ENCODE measurements at regions of chr1 and their contacts with region 1.

Region 1: DNA sequence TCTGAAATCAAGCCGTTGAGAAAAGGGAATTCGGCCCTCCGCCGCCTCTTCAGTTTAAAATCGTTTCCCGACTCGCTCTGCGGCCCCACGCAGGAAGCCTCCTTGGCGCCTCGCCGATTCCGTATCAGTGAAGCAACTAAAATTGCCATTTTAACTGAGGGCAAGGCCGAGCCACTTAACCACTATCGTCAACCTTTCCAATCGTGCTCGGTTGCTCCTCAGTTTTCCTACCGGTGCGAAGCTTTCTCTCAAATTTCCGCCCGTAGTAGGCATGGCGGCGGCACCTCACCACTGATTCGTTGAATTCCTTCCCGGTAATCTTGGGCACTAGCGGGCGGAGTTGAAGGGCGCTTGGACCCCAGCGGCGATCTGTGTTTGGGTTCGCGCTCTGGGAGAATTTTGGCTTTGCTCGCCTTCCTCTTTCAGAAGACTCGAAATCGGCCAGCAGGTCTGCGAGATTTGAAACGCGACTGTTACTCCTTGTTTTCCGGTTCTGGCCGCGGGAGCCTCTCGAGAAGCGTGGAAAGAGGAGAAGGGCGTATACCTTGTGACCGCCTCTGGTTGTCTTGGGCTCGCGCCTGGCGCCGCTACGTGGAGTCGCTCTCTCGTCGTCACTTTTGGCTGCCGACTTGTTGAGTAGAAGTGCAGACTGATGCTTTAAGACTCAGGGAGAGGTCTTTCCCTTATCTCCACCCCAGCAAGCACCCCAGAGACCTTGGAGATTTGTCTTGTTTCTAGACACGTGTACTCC is at the starts of genes CENPL and DARS2:
- DNase-seq: peak; percentile 98
- H3K4me3 ChIP-seq: peak within 1 kb of the TSS; percentile 87 to 92 (median 87)
- H3K27ac ChIP-seq: peak within 1 kb of the TSS; percentile 92
- H3K4me1 ChIP-seq: peaks cover 15% of the 10 kb centered on the region
- H3K27me3 ChIP-seq: no peaks in the 10 kb centered on the region
- CTCF ChIP-seq: no peak
- POLR2A ChIP-seq: peak; percentile 85
- total RNA-seq, gene CENPL: 19.0 and 20.8 TPM in 2 replicates
- total RNA-seq, gene DARS2: 30.5 and 33.6 TPM in 2 replicates

Region 2: GRCh38 chr1:173420330-173420806 is 404.1 kb before region 1 on chr1:
- CTCF ChIA-PET with region 1: interaction called, 6 read pairs
- POLR2A ChIA-PET with region 1: no interaction called
- dilution Hi-C with region 1: no loop called
- intact Hi-C with region 1: loop called (anchors 1 kb)
- DNase-seq: peak; percentile 83
- H3K4me3 ChIP-seq: no peak overlapping the region
- H3K27ac ChIP-seq: no peak overlapping the region
- H3K4me1 ChIP-seq: peaks cover 5% of the 10 kb centered on the region
- H3K27me3 ChIP-seq: no peaks in the 10 kb centered on the region
- CTCF ChIP-seq: peak; percentile 63 to 76
- POLR2A ChIP-seq: no peak

Region 3: DNA sequence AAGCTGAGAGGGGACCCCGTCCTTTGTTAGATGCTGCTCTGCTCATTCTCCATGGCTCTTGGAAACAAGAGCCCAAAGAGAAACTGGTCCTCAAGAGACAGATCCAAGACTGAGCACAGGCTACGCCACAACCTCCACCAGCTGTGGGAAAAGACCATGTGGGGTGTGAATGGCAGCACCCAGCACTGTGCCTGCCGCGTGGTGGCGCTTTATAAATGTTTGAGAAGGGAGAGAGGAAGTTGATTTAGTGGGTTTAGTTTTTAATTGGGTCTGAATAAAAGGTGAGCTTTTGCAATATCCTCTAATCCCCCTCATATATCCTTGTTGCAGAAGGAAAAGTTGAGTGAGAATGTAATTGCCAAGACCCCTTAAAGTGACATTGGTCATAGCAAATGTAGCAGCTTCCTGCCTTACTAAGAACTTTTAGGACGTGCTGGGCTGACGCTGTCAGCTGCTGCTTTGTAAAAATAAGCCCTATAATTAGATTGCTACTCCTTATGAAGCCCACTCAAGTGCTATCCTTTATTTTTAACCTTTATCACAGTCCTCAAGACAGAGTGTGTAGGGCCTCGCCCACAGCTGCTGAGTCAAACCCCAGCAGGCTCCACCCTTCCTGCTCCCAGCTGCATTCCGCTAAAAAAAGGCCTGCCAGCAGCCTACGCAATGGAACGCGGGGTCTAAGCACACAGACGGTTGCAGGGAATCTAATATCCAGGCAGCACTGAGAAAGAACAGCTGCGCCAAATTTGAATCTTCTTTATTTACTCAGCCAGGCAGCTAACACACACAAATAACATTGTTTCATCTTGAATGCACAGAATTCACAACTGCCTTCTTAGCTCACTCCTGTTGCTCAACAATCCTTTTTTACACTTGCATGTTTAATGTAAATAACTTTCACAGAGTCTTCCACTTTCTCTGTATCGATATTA is 394.8 kb before region 1 on chr1:
- CTCF ChIA-PET with region 1: interaction called, 49 read pairs
- POLR2A ChIA-PET with region 1: interaction called, 3 read pairs
- dilution Hi-C with region 1: no loop called
- intact Hi-C with region 1: loop called (anchors 1 kb)
- DNase-seq: peak; percentile 75
- H3K4me3 ChIP-seq: no peak overlapping the region
- H3K27ac ChIP-seq: peak overlapping the region; percentile 64
- H3K4me1 ChIP-seq: peaks cover 12% of the 10 kb centered on the region
- H3K27me3 ChIP-seq: no peaks in the 10 kb centered on the region
- CTCF ChIP-seq: peak; percentile 56 to 65
- POLR2A ChIP-seq: no peak

Region 4: GRCh38 chr1:173742203-173742886 is 82.2 kb before region 1 on chr1:
- CTCF ChIA-PET with region 1: no interaction called
- POLR2A ChIA-PET with region 1: no interaction called
- dilution Hi-C with region 1: no loop called
- intact Hi-C with region 1: no loop called
- DNase-seq: no peak
- H3K4me3 ChIP-seq: no peak overlapping the region
- H3K27ac ChIP-seq: no peak overlapping the region
- H3K4me1 ChIP-seq: no peaks in the 10 kb centered on the region
- H3K27me3 ChIP-seq: no peaks in the 10 kb centered on the region
- CTCF ChIP-seq: no peak
- POLR2A ChIP-seq: no peak

Region 5: DNA sequence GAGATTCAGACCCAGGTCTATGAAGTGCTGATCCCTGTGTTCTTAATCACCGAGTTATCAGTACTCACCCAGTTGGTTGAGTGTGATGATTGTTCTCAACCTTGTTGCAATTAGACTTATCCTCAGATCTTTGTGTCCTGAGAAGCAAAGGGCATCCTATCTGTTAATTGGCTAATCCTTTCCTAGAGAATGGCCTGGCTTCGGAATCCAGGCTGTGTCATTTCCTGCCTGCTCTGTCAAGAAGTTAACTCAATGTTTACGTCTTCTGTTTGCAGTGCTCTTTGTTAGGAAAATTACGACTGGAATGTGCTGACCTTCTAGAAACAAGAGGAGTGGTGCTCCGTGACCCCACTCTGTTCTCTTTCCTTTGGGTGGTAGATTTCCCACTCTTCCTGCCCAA is 28.6 kb after region 1 on chr1:
- CTCF ChIA-PET with region 1: no interaction called
- POLR2A ChIA-PET with region 1: no interaction called
- dilution Hi-C with region 1: no loop called
- intact Hi-C with region 1: loop called (anchors 1 kb)
- DNase-seq: peak; percentile 96
- H3K4me3 ChIP-seq: peak overlapping the region in 1 of 3 experiments; percentile 6
- H3K27ac ChIP-seq: peak overlapping the region; percentile 92
- H3K4me1 ChIP-seq: peaks cover 15% of the 10 kb centered on the region
- H3K27me3 ChIP-seq: no peaks in the 10 kb centered on the region
- CTCF ChIP-seq: no peak
- POLR2A ChIP-seq: peak; percentile 15

Region 6: GRCh38 chr1:174123843-174124242 is 299.3 kb after region 1 on chr1:
- CTCF ChIA-PET with region 1: no interaction called
- POLR2A ChIA-PET with region 1: no interaction called
- dilution Hi-C with region 1: no loop called
- intact Hi-C with region 1: no loop called
- DNase-seq: no peak
- H3K4me3 ChIP-seq: no peak overlapping the region
- H3K27ac ChIP-seq: no peak overlapping the region
- H3K4me1 ChIP-seq: no peaks in the 10 kb centered on the region
- H3K27me3 ChIP-seq: no peaks in the 10 kb centered on the region
- CTCF ChIP-seq: no peak
- POLR2A ChIP-seq: no peak

Region 7: GRCh38 chr1:174159252-174160108 is 335.0 kb after region 1 on chr1 and contains the start of gene RABGAP1L:
- CTCF ChIA-PET with region 1: no interaction called
- POLR2A ChIA-PET with region 1: no interaction called
- dilution Hi-C with region 1: no loop called
- intact Hi-C with region 1: loop called (anchors 2 kb)
- DNase-seq: peak; percentile 96
- H3K4me3 ChIP-seq: peak within 1 kb of the TSS; percentile 77 to 91 (median 81)
- H3K27ac ChIP-seq: no peak within 1 kb of the TSS
- H3K4me1 ChIP-seq: peaks cover 8% of the 10 kb centered on the region
- H3K27me3 ChIP-seq: no peaks in the 10 kb centered on the region
- CTCF ChIP-seq: no peak
- POLR2A ChIP-seq: no peak
- total RNA-seq, gene RABGAP1L: 20.7 and 22.2 TPM in 2 replicates